ENCODE measurements at regions of chr3 and their contacts with region 1.

Region 1: GRCh38 chr3:36540888-36541518 is 160.7 kb downstream of the STAC start:
- ATAC-seq: peak in 4 of 8 experiments; percentile 34 to 68 (median 54)
- H3K4me3 ChIP-seq: no peak overlapping the region
- H3K27ac ChIP-seq: no peak overlapping the region
- H3K4me1 ChIP-seq: no peaks in the 10 kb centered on the region

Region 2: GRCh38 chr3:35965908-35966307 is 575.1 kb before region 1 on chr3:
- in situ Hi-C with region 1: loop called in 1 of 9 experiments (anchors 25 kb)
- ATAC-seq: peak; percentile 60 to 93 (median 80)
- H3K4me3 ChIP-seq: no peak overlapping the region
- H3K27ac ChIP-seq: no peak overlapping the region
- H3K4me1 ChIP-seq: no peaks in the 10 kb centered on the region

Region 3: GRCh38 chr3:36132214-36132613 is 408.8 kb before region 1 on chr3:
- in situ Hi-C with region 1: loop called in 1 of 9 experiments (anchors 25 kb)
- ATAC-seq: no peak
- H3K4me3 ChIP-seq: no peak overlapping the region
- H3K27ac ChIP-seq: no peak overlapping the region
- H3K4me1 ChIP-seq: no peaks in the 10 kb centered on the region